Psoas muscle (tissue), 8 donors: ENCODE measurements at regions of chr15 and their contacts with region 1.

Region 1: GRCh38 chr15:31311735-31312619 is 14.7 kb upstream of the KLF13 start:
- DNase-seq: no peak
- ATAC-seq: no peak
- H3K4me3 ChIP-seq: no peak overlapping the region
- H3K27ac ChIP-seq: no peak overlapping the region
- H3K4me1 ChIP-seq: no peaks in the 10 kb centered on the region
- H3K27me3 ChIP-seq: peaks cover 0 to 6% (median 5%) of the 10 kb centered on the region in 3 donors
- CTCF ChIP-seq: no peak

Region 2: GRCh38 chr15:31254431-31255175 is 57.4 kb before region 1 on chr15:
- intact Hi-C with region 1: loop called in 1 of 2 experiments (anchors 10 kb)
- DNase-seq: no peak
- ATAC-seq: no peak
- H3K4me3 ChIP-seq: no peak overlapping the region
- H3K27ac ChIP-seq: no peak overlapping the region
- H3K4me1 ChIP-seq: peaks cover 3% of the 10 kb centered on the region
- H3K27me3 ChIP-seq: no peaks in the 10 kb centered on the region
- CTCF ChIP-seq: no peak

Region 3: DNA sequence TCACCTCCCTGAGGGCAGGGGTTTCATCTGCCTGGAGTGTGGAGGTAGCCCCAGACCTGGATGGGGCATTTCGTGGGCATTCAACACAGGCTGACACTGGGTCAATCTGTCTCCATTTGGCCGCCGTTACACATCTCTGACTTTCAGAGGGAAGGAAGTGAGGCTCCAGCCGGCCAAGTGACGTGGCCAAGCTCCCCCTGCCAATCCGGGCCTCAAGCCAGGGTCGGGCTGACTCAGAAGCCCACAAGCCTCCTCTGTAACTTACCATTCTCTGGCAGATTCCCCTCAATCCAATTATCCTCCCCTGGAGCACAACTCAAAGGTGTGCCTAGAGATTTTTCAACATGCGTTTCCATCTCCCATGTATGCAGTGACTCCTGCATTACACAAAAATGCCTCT is 242.3 kb after region 1 on chr15:
- intact Hi-C with region 1: no loop called
- DNase-seq: peak; percentile 45 to 69
- ATAC-seq: peak in 2 of 4 donors; percentile 36 to 56
- H3K4me3 ChIP-seq: no peak overlapping the region
- H3K27ac ChIP-seq: peak overlapping the region; percentile 16
- H3K4me1 ChIP-seq: no peaks in the 10 kb centered on the region
- H3K27me3 ChIP-seq: no peaks in the 10 kb centered on the region
- CTCF ChIP-seq: no peak